ENCODE measurements at regions of chr2 and their contacts with region 1.

Region 1: GRCh38 chr2:27281855-27282559 is at the start of gene TRIM54:
- DNase-seq: no peak
- ATAC-seq: no peak
- H3K4me3 Mint-ChIP-seq: no peak within 1 kb of the TSS
- H3K27ac Mint-ChIP-seq: no peak within 1 kb of the TSS
- H3K4me1 Mint-ChIP-seq: peaks cover 6% of the 10 kb centered on the region
- H3K27me3 Mint-ChIP-seq: peaks cover 8% of the 10 kb centered on the region
- CTCF ChIP-seq: no peak
- total RNA-seq, gene TRIM54: 0.16 to 0.23 TPM

Region 2: GRCh38 chr2:26712486-26713465 is 569.2 kb before region 1 on chr2:
- CTCF ChIA-PET with region 1: no interaction called
- POLR2A ChIA-PET with region 1: no interaction called
- intact Hi-C with region 1: no loop called
- DNase-seq: no peak
- ATAC-seq: no peak
- H3K4me3 Mint-ChIP-seq: no peak overlapping the region
- H3K27ac Mint-ChIP-seq: no peak overlapping the region
- H3K4me1 Mint-ChIP-seq: no peaks in the 10 kb centered on the region
- H3K27me3 Mint-ChIP-seq: no peaks in the 10 kb centered on the region
- CTCF ChIP-seq: no peak

Region 3: DNA sequence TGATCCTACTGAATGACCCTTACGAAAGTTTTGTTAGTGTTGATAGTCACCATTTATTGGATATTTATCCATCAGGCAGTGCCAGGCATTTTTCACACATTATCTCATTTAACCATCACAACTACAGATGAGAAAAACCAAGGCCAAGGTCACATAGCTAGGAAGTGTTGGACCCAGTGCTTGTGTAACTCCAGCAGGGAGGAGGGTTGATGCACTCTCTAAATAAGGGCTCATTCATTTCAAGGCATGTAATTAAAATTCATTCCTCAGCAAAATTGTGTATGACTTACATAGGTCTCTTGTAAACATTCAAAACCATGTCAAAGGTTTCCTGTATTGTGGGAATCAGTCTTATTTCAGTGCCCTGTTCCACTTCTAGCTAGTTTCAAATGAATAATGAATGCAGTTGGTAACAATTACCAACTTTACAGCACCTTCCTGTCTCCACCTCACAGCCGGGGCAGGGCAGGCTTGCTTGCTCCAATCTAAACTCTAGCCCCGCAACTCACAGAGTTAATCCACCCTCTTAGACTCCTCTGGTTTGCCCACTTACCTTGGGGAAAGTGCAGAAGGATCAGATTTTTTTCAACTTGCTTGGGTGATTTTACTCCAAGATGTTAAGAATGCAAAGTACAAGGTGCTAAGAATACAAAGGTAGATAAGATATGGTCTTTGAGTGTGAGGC is 317.4 kb before region 1 on chr2:
- CTCF ChIA-PET with region 1: interaction called, 27 read pairs
- POLR2A ChIA-PET with region 1: no interaction called
- intact Hi-C with region 1: loop called (anchors 5 kb)
- DNase-seq: no peak
- ATAC-seq: no peak
- H3K4me3 Mint-ChIP-seq: no peak overlapping the region
- H3K27ac Mint-ChIP-seq: no peak overlapping the region
- H3K4me1 Mint-ChIP-seq: peaks cover 7% of the 10 kb centered on the region
- H3K27me3 Mint-ChIP-seq: peaks cover 21% of the 10 kb centered on the region
- CTCF ChIP-seq: no peak

Region 4: DNA sequence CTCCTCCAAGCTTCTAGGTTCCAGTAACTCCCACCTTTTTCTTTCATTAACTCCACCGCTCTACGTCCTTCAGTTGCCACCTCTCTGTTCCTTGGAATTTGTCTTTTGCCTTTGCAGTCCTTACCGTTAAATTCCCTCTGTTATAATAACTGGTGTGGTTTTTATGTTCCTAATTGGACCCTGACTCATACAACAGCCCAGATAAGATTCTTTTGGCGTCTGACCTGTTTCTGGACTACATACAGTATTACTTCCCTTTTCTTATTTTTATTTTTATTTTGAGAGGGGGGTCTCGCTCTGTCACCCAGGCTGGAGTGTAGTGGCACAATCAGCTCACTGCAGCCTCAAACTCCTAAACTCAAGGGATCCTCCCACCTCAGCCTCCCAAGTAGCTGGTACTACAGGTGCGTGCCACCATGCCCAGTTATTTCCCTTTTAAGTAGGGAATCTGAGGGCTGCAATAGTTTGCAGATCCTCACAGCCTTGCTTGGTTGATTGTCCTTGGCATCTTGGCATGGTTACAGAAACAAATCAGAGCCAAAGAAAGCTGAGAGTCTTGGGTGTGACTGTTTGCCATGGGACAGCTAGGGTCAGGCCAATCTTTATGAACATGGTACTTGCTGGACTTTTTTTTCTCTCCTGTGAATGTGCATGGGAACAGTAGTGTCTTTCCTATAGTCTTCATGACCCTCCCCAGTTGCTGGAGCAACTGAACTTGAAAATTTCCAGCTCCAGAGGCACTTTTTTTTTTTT is 111.2 kb before region 1 on chr2:
- CTCF ChIA-PET with region 1: interaction called, 27 read pairs
- POLR2A ChIA-PET with region 1: no interaction called
- intact Hi-C with region 1: no loop called
- DNase-seq: no peak
- ATAC-seq: no peak
- H3K4me3 Mint-ChIP-seq: no peak overlapping the region
- H3K27ac Mint-ChIP-seq: no peak overlapping the region
- H3K4me1 Mint-ChIP-seq: peaks cover 6% of the 10 kb centered on the region
- H3K27me3 Mint-ChIP-seq: peaks cover 9% of the 10 kb centered on the region
- CTCF ChIP-seq: no peak

Region 5: GRCh38 chr2:27264753-27265535 is 17.1 kb before region 1 on chr2:
- CTCF ChIA-PET with region 1: interaction called, 76 read pairs
- POLR2A ChIA-PET with region 1: interaction called, 5 read pairs
- intact Hi-C with region 1: no loop called
- DNase-seq: peak; percentile 62
- ATAC-seq: peak; percentile 50
- H3K4me3 Mint-ChIP-seq: peak overlapping the region; percentile 65
- H3K27ac Mint-ChIP-seq: no peak overlapping the region
- H3K4me1 Mint-ChIP-seq: peaks cover 24% of the 10 kb centered on the region
- H3K27me3 Mint-ChIP-seq: peaks cover 38% of the 10 kb centered on the region
- CTCF ChIP-seq: no peak

Region 6: DNA sequence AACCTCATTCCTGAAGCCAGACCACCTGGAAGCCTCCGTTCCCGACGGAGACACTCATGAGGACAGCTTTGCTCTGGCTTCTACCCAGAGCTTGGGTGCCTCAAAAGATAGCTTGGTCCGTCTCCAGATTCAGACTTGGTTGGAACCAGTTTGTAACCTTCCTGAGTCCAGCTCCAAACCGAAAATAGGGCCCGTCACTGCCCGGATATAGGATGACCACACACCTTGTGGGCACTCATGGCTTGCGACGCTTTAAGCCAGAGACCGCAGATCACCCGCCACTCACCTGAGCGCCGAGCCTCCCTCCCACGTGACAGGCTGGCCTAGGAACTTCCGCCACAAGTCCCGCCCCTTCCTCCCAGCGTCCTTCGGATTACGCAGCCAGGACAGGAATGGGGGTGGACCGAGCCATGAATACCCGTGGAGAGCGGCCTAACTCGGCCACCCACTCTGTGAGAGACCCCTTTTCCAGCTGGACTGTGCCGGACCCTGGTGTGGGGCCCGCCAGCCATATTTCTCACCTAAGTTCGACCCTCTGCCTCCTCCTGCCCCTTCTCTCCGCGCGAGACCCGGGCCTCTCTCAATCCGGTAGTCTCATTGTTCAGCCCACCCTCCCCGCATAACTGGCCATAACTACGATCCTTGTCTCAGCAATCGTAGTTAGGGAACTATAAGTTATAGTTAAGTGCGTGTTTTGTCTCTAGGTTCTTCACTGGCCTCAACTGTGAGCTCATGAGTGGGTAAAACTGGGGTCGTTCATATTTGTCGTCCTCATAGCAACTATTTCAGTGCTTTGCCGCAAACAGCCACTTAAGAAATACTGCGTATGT is 41.0 kb after region 1 on chr2 and contains the start of gene MPV17:
- CTCF ChIA-PET with region 1: interaction called, 11 read pairs
- POLR2A ChIA-PET with region 1: no interaction called
- intact Hi-C with region 1: no loop called
- DNase-seq: peak; percentile 94
- ATAC-seq: peak; percentile 97
- H3K4me3 Mint-ChIP-seq: peak within 1 kb of the TSS; percentile 97
- H3K27ac Mint-ChIP-seq: peak within 1 kb of the TSS; percentile 97
- H3K4me1 Mint-ChIP-seq: peaks cover 21% of the 10 kb centered on the region
- H3K27me3 Mint-ChIP-seq: no peaks in the 10 kb centered on the region
- CTCF ChIP-seq: no peak
- total RNA-seq, gene MPV17: 72.3 to 85.1 TPM